ENCODE measurements at regions of chr20 and their contacts with region 1.

Region 1: DNA sequence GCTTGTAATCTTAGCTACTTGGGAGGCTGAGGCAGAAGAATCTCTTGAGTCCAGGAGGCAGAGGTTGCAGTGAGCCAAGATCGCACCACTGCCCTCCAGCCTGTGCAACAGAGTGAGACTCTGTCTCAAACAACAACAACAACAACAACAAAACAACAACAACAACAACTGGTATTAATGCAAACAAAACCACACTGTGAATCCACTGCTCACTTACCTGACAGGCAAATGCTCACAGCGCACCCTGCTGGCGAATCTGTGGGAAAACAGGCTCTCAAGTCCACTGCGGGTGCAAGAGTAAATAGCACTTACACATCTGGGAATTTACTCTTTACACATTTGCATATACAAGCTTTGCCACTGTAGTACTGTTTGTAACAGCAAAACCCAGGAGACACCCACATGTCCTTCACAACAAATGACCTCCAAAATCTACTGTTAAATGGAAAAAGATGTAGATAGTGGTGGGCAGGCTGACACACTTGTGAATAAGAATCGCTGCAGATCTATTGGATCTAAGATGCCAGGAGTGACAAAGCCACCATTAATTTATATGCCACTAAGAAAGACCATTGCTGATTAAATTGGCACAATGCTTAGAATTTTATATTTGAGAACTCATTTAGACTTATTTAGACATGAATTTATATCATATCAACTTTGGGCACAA is 29.3 kb downstream of the NSFL1C start:
- DNase-seq: peak; percentile 64 to 84 (median 69)
- H3K4me3 ChIP-seq: no peak overlapping the region
- H3K4me3 Mint-ChIP-seq: no peak overlapping the region
- H3K27ac ChIP-seq: no peak overlapping the region
- H3K27ac Mint-ChIP-seq: peak overlapping the region in 2 of 8 donors; percentile 37 to 40
- H3K4me1 ChIP-seq: peaks cover 21% of the 10 kb centered on the region
- H3K4me1 Mint-ChIP-seq: peaks cover 24 to 26% (median 24%) of the 10 kb centered on the region in 3 donors
- H3K27me3 ChIP-seq: no peaks in the 10 kb centered on the region
- H3K27me3 Mint-ChIP-seq: peaks cover 5 to 7% of the 10 kb centered on the region in 2 donors

Region 2: DNA sequence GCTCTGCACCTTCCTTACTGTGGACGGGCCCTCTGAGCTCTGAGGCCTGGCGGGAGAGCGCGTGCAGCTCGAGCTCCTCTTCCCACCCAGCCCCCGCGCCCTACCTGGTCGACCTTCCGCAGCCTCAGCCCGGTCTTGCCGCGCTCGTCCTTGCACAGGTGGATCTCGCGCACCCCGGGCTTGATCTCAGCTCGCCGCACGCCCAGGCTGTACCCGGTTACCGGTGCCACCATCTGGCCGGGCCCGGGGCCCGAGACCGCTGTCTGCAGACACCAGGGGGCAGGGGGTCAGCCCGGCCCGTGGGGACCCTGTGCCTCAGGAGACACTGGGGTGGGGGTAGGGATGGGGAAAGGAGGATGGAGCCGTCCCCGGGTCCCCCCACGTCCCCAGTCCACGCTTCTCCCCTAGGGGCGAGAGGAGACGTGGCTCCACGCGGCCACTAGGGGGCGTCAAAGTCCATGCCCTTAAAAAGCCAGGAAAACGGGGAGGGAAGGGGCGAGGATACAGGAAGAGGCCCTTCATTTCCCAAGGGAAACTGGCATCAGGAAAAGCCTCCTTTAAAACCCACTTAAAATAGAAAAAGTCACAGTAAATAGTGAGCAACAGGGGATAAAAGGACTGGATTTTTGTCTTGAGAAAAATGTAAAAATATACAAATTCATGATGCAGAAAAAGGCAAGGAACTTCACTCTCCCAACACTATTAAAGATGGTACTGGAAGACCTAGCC is 124.0 kb before region 1 on chr20:
- CTCF ChIA-PET with region 1: interaction called, 27 read pairs
- POLR2A ChIA-PET with region 1: no interaction called
- DNase-seq: peak; percentile 47 to 76 (median 64)
- H3K4me3 ChIP-seq: no peak overlapping the region
- H3K4me3 Mint-ChIP-seq: no peak overlapping the region
- H3K27ac ChIP-seq: no peak overlapping the region
- H3K27ac Mint-ChIP-seq: peak overlapping the region in 2 of 8 donors; percentile 47 to 91
- H3K4me1 ChIP-seq: peaks cover 7% of the 10 kb centered on the region
- H3K4me1 Mint-ChIP-seq: peaks cover 0 to 8% (median 3%) of the 10 kb centered on the region in 3 donors
- H3K27me3 ChIP-seq: no peaks in the 10 kb centered on the region
- H3K27me3 Mint-ChIP-seq: peaks cover 0 to 4% of the 10 kb centered on the region in 2 donors

Region 3: GRCh38 chr20:1325173-1326030 is 112.0 kb before region 1 on chr20:
- CTCF ChIA-PET with region 1: interaction called, 11 read pairs
- POLR2A ChIA-PET with region 1: no interaction called
- DNase-seq: peak; percentile 98 to 100 (median 98)
- H3K4me3 ChIP-seq: peak overlapping the region; percentile 99
- H3K4me3 Mint-ChIP-seq: no peak overlapping the region
- H3K27ac ChIP-seq: peak overlapping the region; percentile 99
- H3K27ac Mint-ChIP-seq: no peak overlapping the region
- H3K4me1 ChIP-seq: peaks cover 36% of the 10 kb centered on the region
- H3K4me1 Mint-ChIP-seq: peaks cover 14 to 26% (median 15%) of the 10 kb centered on the region in 3 donors
- H3K27me3 ChIP-seq: no peaks in the 10 kb centered on the region
- H3K27me3 Mint-ChIP-seq: no peaks in the 10 kb centered on the region

Region 4: GRCh38 chr20:1448081-1448620 is 10.8 kb after region 1 on chr20:
- CTCF ChIA-PET with region 1: interaction called, 17 read pairs
- POLR2A ChIA-PET with region 1: no interaction called
- DNase-seq: no peak
- H3K4me3 ChIP-seq: no peak overlapping the region
- H3K4me3 Mint-ChIP-seq: no peak overlapping the region
- H3K27ac ChIP-seq: no peak overlapping the region
- H3K27ac Mint-ChIP-seq: peak overlapping the region in 1 of 8 donors; percentile 58
- H3K4me1 ChIP-seq: no peaks in the 10 kb centered on the region
- H3K4me1 Mint-ChIP-seq: no peaks in the 10 kb centered on the region
- H3K27me3 ChIP-seq: no peaks in the 10 kb centered on the region
- H3K27me3 Mint-ChIP-seq: no peaks in the 10 kb centered on the region

Measured in CD8-positive, alpha-beta memory T cell (primary cell).